PC-9 (cell line): ENCODE measurements at regions of chr11 and their contacts with region 1.

Region 1: GRCh38 chr11:67691149-67691548 is 16.7 kb upstream of the ALDH3B2 start:
- DNase-seq: peak in 1 of 2 experiments; percentile 45
- H3K4me3 ChIP-seq: no peak overlapping the region
- H3K27ac ChIP-seq: no peak overlapping the region
- H3K4me1 ChIP-seq: 0 out of 2 replicates have a peak, but pooled peaks cover 2% of the 10 kb centered on the region
- H3K27me3 ChIP-seq: no peaks in the 10 kb centered on the region
- CTCF ChIP-seq: peak; percentile 58; the same call in 1 of the 2 replicates

Region 2: GRCh38 chr11:67584881-67585557 is 106.1 kb before region 1 on chr11:
- CTCF ChIA-PET with region 1: no interaction called
- POLR2A ChIA-PET with region 1: no interaction called
- intact Hi-C with region 1: no loop called
- DNase-seq: no peak
- H3K4me3 ChIP-seq: peak overlapping the region; percentile 82; the same call in 1 of the 2 replicates
- H3K27ac ChIP-seq: no peak overlapping the region
- H3K4me1 ChIP-seq: peaks cover 40% of the 10 kb centered on the region
- H3K27me3 ChIP-seq: no peaks in the 10 kb centered on the region
- CTCF ChIP-seq: no peak

Region 3: DNA sequence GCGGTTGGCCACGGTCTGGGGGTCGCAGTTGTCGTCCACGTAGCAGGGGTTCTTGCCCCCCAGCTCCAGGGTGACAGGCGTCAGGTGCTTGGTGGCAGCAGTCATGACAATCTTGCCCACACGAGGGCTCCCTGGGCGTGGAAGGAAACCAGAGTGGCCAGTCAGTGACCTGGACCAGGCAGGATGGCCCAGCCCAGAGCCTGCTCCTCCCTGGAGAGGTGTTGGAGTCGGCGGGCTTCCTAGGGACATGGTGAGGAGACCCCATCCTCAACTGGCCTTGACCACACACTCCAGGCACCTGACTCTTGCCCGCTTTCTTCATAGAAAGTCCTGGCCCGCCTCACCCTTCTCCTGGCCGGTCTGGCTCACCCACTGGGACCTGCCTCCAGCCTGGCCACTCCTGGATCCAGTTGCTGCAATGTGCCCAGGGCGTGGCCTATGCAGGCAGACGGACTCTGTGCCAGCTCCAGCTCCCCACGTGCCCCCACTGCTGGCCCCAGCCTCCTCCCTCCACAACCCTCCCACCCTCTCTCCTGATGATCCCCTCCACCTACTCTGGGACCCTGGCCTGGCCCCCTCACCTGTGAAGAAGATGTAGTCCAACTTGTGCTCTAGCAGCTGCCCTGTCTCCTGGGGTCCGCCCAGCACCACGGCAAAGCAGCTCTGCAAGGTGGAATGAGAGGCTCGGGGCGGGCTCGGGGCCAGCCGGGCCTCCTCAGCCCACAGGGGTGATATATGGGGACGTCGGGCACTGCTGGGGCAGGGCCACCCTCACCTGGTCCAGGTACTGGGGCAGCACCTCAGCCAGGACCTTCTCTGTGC is 25.4 kb before region 1 on chr11:
- CTCF ChIA-PET with region 1: interaction called, 7 read pairs
- POLR2A ChIA-PET with region 1: no interaction called
- intact Hi-C with region 1: loop called (anchors 1 kb)
- DNase-seq: peak; percentile 55 to 76
- H3K4me3 ChIP-seq: no peak overlapping the region
- H3K27ac ChIP-seq: no peak overlapping the region
- H3K4me1 ChIP-seq: peaks cover 7% of the 10 kb centered on the region; the same call in 1 of the 2 replicates
- H3K27me3 ChIP-seq: no peaks in the 10 kb centered on the region
- CTCF ChIP-seq: peak; percentile 70